AG04449 (cell line): ENCODE measurements at regions of chr3 and their contacts with region 1.

Region 1: GRCh38 chr3:170811928-170812591 is 57.9 kb downstream of the RPL22L1 start:
- DNase-seq: peak; percentile 47
- H3K4me3 ChIP-seq: no peak overlapping the region
- CTCF ChIP-seq: peak; percentile 75

Region 2: GRCh38 chr3:170414202-170414663 is 397.8 kb before region 1 on chr3:
- CTCF ChIA-PET with region 1: interaction called, 493 read pairs
- POLR2A ChIA-PET with region 1: interaction called, 3 read pairs
- DNase-seq: peak; percentile 72
- H3K4me3 ChIP-seq: no peak overlapping the region
- CTCF ChIP-seq: peak; percentile 83

Region 3: GRCh38 chr3:170499565-170500156 is 312.4 kb before region 1 on chr3:
- CTCF ChIA-PET with region 1: interaction called, 43 read pairs
- POLR2A ChIA-PET with region 1: no interaction called
- DNase-seq: no peak
- H3K4me3 ChIP-seq: no peak overlapping the region
- CTCF ChIP-seq: peak; percentile 64

Region 4: DNA sequence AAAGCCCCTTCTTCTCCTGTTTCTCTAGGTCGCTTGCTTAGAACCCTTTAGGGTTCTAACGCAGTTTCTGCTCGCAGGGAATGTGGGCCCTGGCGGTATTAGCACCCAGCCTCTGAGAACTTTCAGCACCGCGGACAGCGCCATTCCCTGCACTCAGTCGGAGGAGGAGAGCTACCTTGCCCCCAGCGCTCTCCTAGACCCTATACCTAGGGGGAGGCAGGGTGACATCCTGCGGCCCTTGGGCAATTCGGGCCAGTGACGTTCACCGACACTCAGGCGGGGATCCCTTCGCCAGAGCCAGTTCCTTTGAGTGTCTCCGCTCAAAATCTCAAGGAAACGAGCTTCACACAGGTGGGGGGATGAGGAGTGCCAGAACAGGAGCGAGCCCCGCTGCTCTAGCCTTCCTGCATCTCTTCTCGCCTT is 227.5 kb before region 1 on chr3:
- CTCF ChIA-PET with region 1: interaction called, 45 read pairs
- POLR2A ChIA-PET with region 1: no interaction called
- DNase-seq: no peak
- H3K4me3 ChIP-seq: peak overlapping the region; percentile 54
- CTCF ChIP-seq: no peak

Region 5: GRCh38 chr3:170632780-170633179 is 179.3 kb before region 1 on chr3:
- CTCF ChIA-PET with region 1: interaction called, 14 read pairs
- POLR2A ChIA-PET with region 1: no interaction called
- DNase-seq: no peak
- H3K4me3 ChIP-seq: no peak overlapping the region
- CTCF ChIP-seq: no peak

Region 6: GRCh38 chr3:170726976-170727661 is 84.9 kb before region 1 on chr3:
- CTCF ChIA-PET with region 1: interaction called, 36 read pairs
- POLR2A ChIA-PET with region 1: no interaction called
- DNase-seq: no peak
- H3K4me3 ChIP-seq: peak overlapping the region; percentile 36
- CTCF ChIP-seq: no peak

Region 7: DNA sequence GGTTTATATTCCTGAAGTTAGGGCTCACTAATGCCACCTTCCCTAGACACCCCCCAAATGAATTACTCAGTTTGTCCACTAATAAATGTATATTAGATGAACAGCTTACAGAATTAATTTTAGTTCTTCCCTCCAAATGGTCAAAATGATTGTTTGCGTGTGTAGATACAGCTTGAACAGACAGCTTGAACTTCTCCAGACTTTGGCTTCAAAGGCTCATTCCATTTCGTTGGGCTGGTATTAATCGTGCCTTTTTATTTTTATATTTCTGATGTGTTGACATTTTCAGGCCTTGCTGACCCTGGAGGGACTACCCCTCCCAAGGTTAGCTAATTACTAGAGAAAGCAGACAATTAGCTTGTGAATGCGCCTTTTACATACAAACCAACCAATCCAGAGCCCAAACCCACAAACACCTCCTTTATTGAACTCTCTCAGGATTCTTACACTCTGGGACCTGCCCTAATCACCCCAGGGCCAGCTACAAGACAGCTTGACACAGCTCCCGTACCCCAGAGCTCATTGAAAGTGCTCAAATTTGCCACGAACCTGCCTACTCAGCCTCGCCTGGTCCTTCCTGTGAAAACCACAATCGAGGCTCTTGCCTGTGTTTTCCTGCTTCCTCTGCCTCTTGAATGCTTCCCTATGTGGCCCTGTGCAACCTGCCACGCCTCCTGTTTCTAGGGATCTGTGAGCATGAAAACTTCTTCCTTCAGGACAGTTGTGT is 17.6 kb after region 1 on chr3:
- CTCF ChIA-PET with region 1: interaction called, 100 read pairs
- POLR2A ChIA-PET with region 1: no interaction called
- DNase-seq: no peak
- H3K4me3 ChIP-seq: no peak overlapping the region
- CTCF ChIP-seq: no peak

Region 8: GRCh38 chr3:170953229-170953628 is 141.2 kb after region 1 on chr3:
- CTCF ChIA-PET with region 1: no interaction called
- POLR2A ChIA-PET with region 1: no interaction called
- DNase-seq: no peak
- H3K4me3 ChIP-seq: no peak overlapping the region
- CTCF ChIP-seq: no peak

Region 9: DNA sequence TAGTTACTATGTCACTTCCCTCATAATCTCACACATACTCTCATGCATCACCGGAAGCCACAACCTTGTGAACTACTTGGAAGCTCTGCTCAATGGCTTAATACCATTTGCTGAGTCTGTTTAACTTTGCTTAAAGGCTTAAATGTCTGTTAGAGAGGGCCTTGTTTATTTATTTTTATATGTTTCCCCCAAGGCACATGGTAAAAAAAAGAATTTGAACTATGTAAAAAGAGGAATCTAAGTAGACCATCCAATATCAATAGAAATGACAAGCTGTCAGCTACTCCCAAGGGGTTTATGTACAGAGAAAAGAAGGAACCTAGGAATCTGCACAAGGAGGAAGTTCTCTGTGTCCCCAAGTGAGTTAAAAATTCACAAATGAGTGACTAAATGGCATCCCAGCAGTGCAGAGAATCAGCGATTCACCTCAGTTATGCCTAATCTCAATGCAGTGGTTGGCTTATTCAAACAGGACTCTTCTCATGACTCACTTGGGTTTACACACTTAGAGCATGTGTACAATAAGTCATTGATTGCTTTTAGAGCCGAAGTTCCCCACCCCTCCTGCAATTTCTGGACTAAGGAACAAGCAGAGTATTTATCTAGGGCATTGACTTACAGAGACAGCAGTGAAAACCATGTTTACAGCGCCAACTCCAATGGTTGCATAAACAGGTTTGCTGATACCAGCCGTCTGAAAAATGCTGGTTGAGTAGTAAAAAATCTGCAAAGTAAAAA is 190.1 kb after region 1 on chr3:
- CTCF ChIA-PET with region 1: no interaction called
- POLR2A ChIA-PET with region 1: no interaction called
- DNase-seq: no peak
- H3K4me3 ChIP-seq: no peak overlapping the region
- CTCF ChIP-seq: no peak